ENCODE measurements at regions of chr1 and their contacts with region 1.

Region 1: DNA sequence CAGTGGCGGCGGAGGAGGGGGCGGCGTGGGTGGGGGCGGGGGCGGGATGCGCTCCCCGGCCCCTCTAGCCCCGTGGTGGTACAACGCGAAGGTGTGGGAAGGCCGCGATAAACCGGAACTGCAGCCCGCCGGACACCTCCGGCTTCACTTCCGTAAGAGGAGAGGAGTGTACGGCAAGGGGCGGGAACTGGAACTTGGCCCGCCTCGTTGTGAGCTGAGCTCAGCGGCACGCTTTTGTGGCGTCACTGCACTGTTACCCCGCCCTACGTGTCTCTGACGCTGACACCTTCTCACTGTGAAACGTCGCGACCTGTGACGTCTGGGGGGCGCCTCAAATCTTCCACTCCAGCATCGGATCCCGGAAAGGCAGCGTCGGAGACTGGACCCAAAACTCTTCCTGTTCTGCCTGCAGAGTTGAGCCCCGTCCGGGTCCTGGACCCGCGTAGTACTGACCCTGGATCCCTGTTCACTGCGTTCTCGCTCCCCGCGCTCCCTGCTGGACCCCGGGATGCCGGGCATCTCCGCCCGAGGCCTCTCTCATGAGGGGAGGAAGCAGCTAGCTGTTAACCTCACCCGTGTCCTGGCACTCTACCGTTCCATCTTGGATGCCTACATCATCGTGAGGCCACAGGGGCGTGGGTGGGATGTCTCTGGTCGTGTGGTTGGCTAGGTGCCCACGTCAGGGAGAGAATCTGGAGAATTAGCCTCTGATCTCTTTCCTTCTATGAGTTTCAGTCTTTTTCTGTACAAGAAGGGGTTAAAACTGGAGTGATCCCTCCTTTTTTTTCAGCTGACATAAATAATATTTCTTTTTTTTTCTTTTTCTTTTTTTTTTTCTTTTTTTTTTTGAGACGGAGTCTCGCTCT is at the start of gene ISG20L2:
- DNase-seq: peak; percentile 83
- ATAC-seq: peak; percentile 91
- H3K4me3 Mint-ChIP-seq: no peak within 1 kb of the TSS
- H3K27ac Mint-ChIP-seq: peak within 1 kb of the TSS; percentile 93
- H3K4me1 Mint-ChIP-seq: peaks cover 25% of the 10 kb centered on the region
- H3K27me3 Mint-ChIP-seq: no peaks in the 10 kb centered on the region
- CTCF ChIP-seq: no peak
- total RNA-seq, gene ISG20L2: 50.8 and 53.0 TPM in 2 replicates

Region 2: DNA sequence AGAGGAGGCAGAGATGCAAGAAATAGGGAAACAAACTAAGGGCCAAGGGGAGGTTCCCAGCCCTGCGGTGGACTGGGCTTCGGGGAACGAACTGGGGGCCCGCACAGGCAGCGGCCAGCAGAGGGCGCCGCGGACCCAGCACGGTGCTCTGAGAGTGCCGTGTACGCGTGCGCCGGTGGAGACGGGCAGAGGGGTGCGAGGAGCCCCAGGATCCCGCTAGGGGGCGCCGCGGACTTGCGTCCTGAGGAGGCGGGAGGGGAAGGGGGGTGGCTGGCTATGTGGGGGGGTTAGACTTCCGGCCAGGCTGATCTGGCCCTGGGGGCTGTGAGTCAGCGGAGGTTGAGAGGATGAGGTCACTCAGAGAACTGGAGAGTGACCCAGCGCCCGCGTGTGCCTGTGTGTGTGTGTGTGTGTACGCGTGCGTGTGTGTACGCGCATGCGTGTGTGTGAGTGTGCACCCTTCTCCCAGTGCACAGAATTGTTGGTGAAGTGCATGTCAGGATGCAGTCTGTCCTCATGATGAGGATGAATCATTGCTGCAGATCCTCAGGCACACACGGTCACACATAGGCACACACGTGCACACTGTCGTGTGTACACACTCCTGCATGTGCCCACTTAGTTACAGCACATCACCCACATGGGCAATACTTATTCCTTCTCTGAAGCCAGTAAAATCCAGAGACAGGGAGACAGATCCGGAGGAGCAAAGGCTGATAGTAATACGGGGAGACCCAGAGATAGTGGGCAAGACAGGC is 68.7 kb before region 1 on chr1:
- CTCF ChIA-PET with region 1: interaction called, 17 read pairs
- POLR2A ChIA-PET with region 1: interaction called, 4 read pairs
- intact Hi-C with region 1: loop called (anchors 1 kb)
- DNase-seq: peak; percentile 87
- ATAC-seq: peak; percentile 85
- H3K4me3 Mint-ChIP-seq: peak overlapping the region; percentile 62
- H3K27ac Mint-ChIP-seq: peak overlapping the region; percentile 63
- H3K4me1 Mint-ChIP-seq: peaks cover 90% of the 10 kb centered on the region
- H3K27me3 Mint-ChIP-seq: peaks cover 22% of the 10 kb centered on the region
- CTCF ChIP-seq: peak; percentile 66

Region 3: DNA sequence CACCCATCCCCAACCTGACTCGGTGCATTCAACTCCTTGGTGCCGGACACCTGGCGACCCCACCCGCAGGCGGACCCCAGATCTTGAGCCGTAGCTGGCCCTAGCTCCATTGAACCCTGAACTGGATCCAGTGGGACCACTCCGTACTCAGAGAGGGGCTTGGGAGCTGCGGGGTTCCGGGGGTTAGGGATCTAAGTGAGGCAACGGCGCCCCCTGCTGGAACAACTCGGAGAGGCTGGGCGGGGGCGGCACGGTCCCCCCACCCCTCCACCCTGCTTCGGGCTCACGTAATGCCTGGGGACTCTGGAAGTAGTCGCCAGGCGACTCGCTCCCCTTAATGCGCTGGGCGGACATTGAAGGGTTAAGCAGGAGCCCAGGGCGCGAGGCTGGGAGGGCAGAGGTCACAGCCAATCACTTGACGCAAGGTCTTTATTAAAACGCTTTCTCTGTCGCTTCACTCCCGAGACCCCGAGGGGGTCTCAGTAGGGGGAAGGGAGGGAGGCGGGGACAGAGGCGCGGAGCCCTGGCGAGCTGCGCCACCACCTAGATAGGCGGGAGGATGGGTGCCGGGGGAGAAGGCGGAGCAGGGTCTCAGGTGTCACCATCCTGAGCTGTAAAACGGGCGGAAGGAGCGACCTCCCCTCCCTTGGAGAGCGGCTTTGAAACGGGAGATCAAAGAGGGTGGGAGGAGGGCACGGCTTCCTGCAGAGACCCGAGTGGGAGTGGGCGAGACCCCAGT is 22.7 kb before region 1 on chr1:
- CTCF ChIA-PET with region 1: interaction called, 13 read pairs
- POLR2A ChIA-PET with region 1: interaction called, 15 read pairs
- intact Hi-C with region 1: loop called (anchors 1 kb)
- DNase-seq: peak; percentile 62
- ATAC-seq: peak; percentile 60
- H3K4me3 Mint-ChIP-seq: peak overlapping the region; percentile 82
- H3K27ac Mint-ChIP-seq: no peak overlapping the region
- H3K4me1 Mint-ChIP-seq: peaks cover 28% of the 10 kb centered on the region
- H3K27me3 Mint-ChIP-seq: peaks cover 21% of the 10 kb centered on the region
- CTCF ChIP-seq: peak; percentile 29

Region 4: GRCh38 chr1:156751758-156752757 is 23.2 kb after region 1 on chr1:
- CTCF ChIA-PET with region 1: interaction called, 14 read pairs
- POLR2A ChIA-PET with region 1: interaction called, 73 read pairs
- intact Hi-C with region 1: loop called (anchors 1 kb)
- DNase-seq: peak; percentile 89
- ATAC-seq: peak; percentile 85
- H3K4me3 Mint-ChIP-seq: peak overlapping the region; percentile 93
- H3K27ac Mint-ChIP-seq: peak overlapping the region; percentile 92
- H3K4me1 Mint-ChIP-seq: peaks cover 62% of the 10 kb centered on the region
- H3K27me3 Mint-ChIP-seq: no peaks in the 10 kb centered on the region
- CTCF ChIP-seq: no peak

Region 5: DNA sequence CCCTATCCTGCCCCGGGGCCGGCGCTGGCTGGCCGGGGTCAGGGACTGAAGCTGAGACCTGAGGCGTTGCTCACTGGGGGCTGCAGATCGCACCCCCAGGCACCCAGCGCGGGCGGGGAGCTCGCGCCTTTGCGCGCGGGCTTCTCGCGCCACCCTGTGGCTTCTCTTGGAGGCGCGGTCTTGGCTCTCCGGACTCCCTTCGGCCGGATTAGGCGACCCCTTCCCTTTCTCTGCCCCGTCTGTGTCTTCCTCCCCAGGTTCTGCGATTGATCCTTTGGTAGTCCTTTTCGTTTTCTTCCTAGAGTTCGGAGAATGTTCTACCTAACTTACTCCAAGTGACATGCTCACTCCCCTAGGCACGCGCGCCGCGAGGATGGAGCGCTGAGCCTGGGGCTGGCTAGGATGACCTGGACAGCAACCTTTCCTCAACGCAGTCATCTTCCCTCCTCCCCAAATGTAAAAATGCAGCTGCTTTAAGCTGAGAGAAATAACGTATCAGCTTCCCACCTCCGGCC is 131.3 kb after region 1 on chr1:
- CTCF ChIA-PET with region 1: interaction called, 45 read pairs
- POLR2A ChIA-PET with region 1: interaction called, 17 read pairs
- intact Hi-C with region 1: loop called (anchors 1 kb)
- DNase-seq: peak; percentile 46
- ATAC-seq: peak; percentile 69
- H3K4me3 Mint-ChIP-seq: peak overlapping the region; percentile 65
- H3K27ac Mint-ChIP-seq: no peak overlapping the region
- H3K4me1 Mint-ChIP-seq: peaks cover 14% of the 10 kb centered on the region
- H3K27me3 Mint-ChIP-seq: peaks cover 50% of the 10 kb centered on the region
- CTCF ChIP-seq: no peak

Region 6: GRCh38 chr1:157000686-157001085 is 271.9 kb after region 1 on chr1:
- CTCF ChIA-PET with region 1: no interaction called
- POLR2A ChIA-PET with region 1: no interaction called
- intact Hi-C with region 1: no loop called
- DNase-seq: no peak
- ATAC-seq: no peak
- H3K4me3 Mint-ChIP-seq: no peak overlapping the region
- H3K27ac Mint-ChIP-seq: no peak overlapping the region
- H3K4me1 Mint-ChIP-seq: no peaks in the 10 kb centered on the region
- H3K27me3 Mint-ChIP-seq: peaks cover 28% of the 10 kb centered on the region
- CTCF ChIP-seq: no peak

Region 7: DNA sequence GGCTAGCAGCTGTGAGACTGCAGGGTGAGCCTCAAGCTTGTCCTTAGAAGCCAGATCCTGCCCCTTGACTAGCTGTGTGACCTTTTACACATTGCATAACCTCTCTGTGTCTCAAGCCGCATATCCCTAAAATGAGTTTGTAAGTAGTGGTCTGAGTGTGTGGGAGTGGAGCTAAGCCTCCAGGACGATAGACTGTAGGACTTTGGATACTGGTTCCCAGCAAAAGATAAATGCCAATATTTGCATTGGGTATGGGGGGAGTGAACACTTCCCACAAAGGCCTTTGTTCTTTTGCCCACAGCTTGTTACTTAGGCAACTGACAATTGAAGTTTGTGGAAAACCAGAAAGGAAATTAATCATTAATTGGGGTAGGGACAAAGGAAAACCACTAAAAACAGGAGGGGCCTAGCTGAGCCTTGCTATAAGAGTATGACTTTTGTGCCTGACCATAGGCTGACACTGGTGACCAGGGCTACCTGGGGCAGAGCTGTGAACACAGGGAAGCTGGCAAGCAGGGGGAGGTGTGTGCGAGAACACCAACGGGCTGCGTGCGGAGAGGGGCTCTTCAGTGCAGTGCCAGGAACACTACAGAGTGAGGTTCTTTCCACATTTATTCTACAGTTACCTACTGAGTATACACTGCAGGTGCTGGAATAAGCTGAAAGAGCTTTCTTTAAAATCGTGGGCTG is 511.8 kb after region 1 on chr1:
- CTCF ChIA-PET with region 1: no interaction called
- POLR2A ChIA-PET with region 1: no interaction called
- intact Hi-C with region 1: no loop called
- DNase-seq: no peak
- ATAC-seq: no peak
- H3K4me3 Mint-ChIP-seq: no peak overlapping the region
- H3K27ac Mint-ChIP-seq: no peak overlapping the region
- H3K4me1 Mint-ChIP-seq: no peaks in the 10 kb centered on the region
- H3K27me3 Mint-ChIP-seq: peaks cover 12% of the 10 kb centered on the region
- CTCF ChIP-seq: no peak

Measured in activated B cell treated with CpG ODN at 0.5 μM for 24 hours (primary cell).